ENCODE measurements at regions of chr6 and their contacts with region 1.

Region 1: DNA sequence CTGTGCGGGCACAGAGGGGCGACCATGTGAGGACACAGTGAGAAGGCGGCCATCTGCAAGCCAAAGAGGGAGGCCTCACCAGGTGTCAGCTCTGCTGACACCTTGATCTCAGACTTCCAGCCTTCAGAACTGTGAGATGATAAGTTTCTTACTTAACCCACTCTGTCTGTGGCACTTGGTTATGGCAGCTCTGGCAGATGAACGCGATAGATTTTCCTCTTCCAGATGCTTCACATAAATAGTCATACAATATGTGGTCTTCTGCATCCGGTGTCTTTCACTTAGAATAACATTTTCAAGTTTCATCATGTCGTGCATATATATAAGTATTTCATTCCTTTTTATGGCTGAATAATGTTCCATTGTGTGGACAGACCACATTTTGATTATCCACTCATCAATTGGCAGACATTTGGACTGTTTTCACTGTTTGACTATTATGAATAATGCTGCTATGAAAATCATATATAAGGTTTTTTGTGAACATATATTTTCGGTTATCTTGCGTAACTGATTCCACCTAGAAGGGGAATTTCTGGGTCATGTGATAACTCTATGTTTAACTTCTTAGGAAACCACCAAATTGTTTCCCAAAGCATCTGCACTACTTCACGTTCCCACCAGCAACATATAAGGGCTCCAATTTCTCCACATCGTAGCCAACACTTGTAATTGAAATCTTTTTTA is 30.2 kb downstream of the PRR18 start:
- DNase-seq: no peak
- H3K4me3 ChIP-seq: no peak overlapping the region
- H3K27ac ChIP-seq: no peak overlapping the region
- H3K4me1 ChIP-seq: peaks cover 0 to 10% (median 1%) of the 10 kb centered on the region in 4 donors
- H3K27me3 ChIP-seq: peaks cover 0 to 20% of the 10 kb centered on the region in 2 donors
- CTCF ChIP-seq: no peak

Region 2: GRCh38 chr6:165782134-165782533 is 495.9 kb before region 1 on chr6:
- intact Hi-C with region 1: loop called (anchors 5 kb)
- DNase-seq: no peak
- H3K4me3 ChIP-seq: no peak overlapping the region
- H3K27ac ChIP-seq: no peak overlapping the region
- H3K4me1 ChIP-seq: no peaks in the 10 kb centered on the region
- H3K27me3 ChIP-seq: peaks cover 0 to 10% of the 10 kb centered on the region in 2 donors
- CTCF ChIP-seq: no peak

Region 3: DNA sequence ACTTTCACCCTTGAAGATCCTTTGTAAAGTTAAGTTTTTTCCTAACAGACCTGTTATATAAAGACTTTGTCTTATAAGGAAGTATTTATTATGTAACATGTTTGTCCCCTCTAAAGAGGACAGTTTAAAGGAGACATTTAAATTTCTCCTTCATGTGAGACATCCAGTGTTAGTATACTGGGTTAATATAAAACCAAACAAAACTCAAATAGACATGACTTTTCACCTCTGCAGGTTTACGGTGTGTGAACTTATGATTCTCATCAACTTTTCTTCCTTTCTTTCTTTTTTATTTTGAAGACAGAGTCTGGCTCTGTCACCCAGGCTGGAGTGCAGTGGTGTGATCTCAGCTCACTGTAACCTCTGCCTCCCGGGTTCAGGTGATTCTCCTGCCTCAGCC is 122.1 kb after region 1 on chr6:
- intact Hi-C with region 1: loop called (anchors 2 kb)
- DNase-seq: no peak
- H3K4me3 ChIP-seq: no peak overlapping the region
- H3K27ac ChIP-seq: no peak overlapping the region
- H3K4me1 ChIP-seq: peaks cover 0 to 5% (median 0%) of the 10 kb centered on the region in 4 donors
- H3K27me3 ChIP-seq: peaks cover 0 to 26% of the 10 kb centered on the region in 2 donors
- CTCF ChIP-seq: no peak